ENCODE measurements at regions of chr13 and their contacts with region 1.

Region 1: DNA sequence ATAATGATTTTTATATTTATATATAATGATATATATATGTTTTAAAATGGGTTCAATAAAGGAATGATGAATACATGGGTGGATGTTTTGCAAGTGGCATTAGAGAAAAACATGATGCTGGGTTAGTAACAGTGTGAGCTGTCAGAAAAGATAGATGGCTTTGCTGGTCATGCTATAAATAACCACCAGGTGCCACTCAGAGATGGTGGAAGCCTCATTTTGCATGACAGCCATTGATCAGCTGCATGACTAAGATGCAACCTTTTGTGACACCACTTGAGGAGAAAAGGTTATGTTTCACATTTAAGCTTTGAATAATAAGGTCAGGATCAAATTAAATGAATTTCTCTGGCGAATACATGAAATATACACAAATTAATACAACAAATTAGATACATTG is 737.7 kb downstream of the PCDH9 start:
- H3K4me3 Mint-ChIP-seq: no peak overlapping the region
- H3K27ac Mint-ChIP-seq: no peak overlapping the region
- H3K4me1 Mint-ChIP-seq: no peaks in the 10 kb centered on the region
- H3K27me3 Mint-ChIP-seq: no peaks in the 10 kb centered on the region

Region 2: GRCh38 chr13:66506979-66507378 is 14.5 kb after region 1 on chr13:
- intact Hi-C with region 1: no loop called
- H3K4me3 Mint-ChIP-seq: no peak overlapping the region
- H3K27ac Mint-ChIP-seq: no peak overlapping the region
- H3K4me1 Mint-ChIP-seq: no peaks in the 10 kb centered on the region
- H3K27me3 Mint-ChIP-seq: no peaks in the 10 kb centered on the region

Region 3: DNA sequence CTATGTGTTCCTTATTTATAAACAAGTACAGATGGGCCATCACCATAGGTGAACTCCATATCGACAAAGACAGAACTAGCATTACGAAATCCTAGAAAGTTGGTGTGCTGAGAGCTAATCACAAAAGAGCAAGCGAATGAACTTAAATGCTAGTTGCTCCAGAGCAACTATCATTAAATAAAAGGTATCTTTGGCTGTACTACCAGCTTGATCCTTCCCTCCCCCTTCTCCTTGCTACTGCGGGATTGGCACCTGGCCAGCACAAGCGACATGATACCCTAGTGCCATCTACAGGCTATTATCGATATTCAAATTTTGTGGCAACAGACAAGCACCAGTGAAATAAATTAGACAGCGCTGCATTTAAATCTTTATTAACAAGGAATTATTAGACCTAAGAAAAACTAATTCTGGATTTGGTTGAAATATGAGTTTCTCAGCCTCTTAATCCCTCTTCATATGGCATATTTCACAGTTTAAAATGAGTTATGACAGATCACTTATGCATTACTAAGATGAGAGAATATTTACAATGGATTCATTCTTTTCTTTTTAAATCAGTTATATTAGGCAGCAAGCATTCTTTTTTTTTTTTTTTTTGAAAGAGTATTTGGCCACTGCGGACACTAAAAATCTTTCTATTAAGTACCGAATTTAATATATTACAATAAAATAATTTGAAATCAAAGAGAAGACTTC is 731.8 kb after region 1 on chr13:
- intact Hi-C with region 1: loop called (anchors 10 kb)
- H3K4me3 Mint-ChIP-seq: no peak overlapping the region
- H3K27ac Mint-ChIP-seq: no peak overlapping the region
- H3K4me1 Mint-ChIP-seq: peaks cover 5% of the 10 kb centered on the region
- H3K27me3 Mint-ChIP-seq: peaks cover 1% of the 10 kb centered on the region